ENCODE measurements at regions of chr16 and their contacts with region 1.

Region 1: DNA sequence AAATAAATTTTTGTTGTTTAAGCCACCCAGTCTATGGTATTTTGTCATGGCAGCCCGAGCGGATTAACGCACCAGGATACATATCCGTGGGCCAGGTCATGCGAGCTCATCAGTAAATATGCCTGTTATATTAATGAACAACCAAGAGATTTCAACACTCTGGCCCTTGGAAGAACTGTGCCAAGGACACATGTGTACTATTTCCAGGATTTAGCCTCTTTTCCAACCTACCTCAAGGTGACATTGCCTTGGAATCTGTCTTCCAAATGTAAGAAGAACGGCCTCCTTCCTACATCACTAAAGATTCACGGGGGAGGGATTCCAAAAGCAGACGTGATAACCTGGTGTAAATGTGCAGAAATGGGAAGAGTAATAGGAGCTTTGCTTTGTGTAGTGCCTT is 72.8 kb upstream of the DYNLRB2 start:
- DNase-seq: no peak
- ATAC-seq: no peak
- H3K4me3 ChIP-seq: no peak overlapping the region
- H3K4me3 Mint-ChIP-seq: no peak overlapping the region
- H3K27ac ChIP-seq: no peak overlapping the region
- H3K27ac Mint-ChIP-seq: no peak overlapping the region
- H3K4me1 ChIP-seq: peaks cover 0 to 6% of the 10 kb centered on the region in 2 experiments
- H3K4me1 Mint-ChIP-seq: peaks cover 4 to 6% (median 4%) of the 10 kb centered on the region in 3 donors
- H3K27me3 ChIP-seq: peaks cover 0 to 18% of the 10 kb centered on the region in 2 experiments
- H3K27me3 Mint-ChIP-seq: peaks cover 10 to 36% of the 10 kb centered on the region in 2 donors

Region 2: DNA sequence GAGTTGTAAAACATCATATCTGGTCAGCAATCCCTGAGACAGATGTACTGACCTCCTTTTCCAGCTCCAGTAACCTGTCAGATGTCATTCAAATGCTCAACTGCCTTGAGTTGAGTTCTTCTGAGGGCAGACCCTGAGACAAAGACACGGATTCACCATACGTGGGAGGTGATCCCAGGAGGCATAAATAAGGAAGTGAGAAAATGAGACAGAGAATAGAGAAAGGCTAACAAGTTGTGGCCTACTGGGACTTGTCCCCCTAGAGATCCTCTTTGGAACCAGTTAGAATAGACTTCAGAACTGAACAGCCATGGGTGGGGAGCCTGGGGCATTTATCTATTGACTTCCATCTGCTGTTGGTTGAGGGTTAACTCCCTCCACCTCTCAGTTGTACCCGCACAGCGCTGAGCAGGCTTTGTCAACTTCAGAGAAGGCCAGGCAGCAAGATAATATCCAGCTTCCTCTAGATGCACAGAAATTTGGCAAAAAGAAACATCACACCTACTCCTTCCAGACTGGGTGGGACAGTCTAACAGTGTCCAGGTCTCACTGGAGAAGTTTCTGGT is 50.2 kb before region 1 on chr16:
- CTCF ChIA-PET with region 1: no interaction called
- POLR2A ChIA-PET with region 1: interaction called in 1 of 2 experiments, 10 read pairs
- DNase-seq: no peak
- ATAC-seq: no peak
- H3K4me3 ChIP-seq: no peak overlapping the region
- H3K4me3 Mint-ChIP-seq: no peak overlapping the region
- H3K27ac ChIP-seq: no peak overlapping the region
- H3K27ac Mint-ChIP-seq: no peak overlapping the region
- H3K4me1 ChIP-seq: no peaks in the 10 kb centered on the region
- H3K4me1 Mint-ChIP-seq: no peaks in the 10 kb centered on the region
- H3K27me3 ChIP-seq: peaks cover 0 to 3% of the 10 kb centered on the region in 2 experiments
- H3K27me3 Mint-ChIP-seq: peaks cover 19 to 31% of the 10 kb centered on the region in 2 donors

Region 3: GRCh38 chr16:80824718-80825364 is 356.8 kb after region 1 on chr16:
- CTCF ChIA-PET with region 1: no interaction called
- POLR2A ChIA-PET with region 1: no interaction called
- DNase-seq: peak in 17 of 35 experiments; percentile 3 to 78 (median 17)
- ATAC-seq: peak in 1 of 4 experiments; percentile 56
- H3K4me3 ChIP-seq: no peak overlapping the region
- H3K4me3 Mint-ChIP-seq: no peak overlapping the region
- H3K27ac ChIP-seq: no peak overlapping the region
- H3K27ac Mint-ChIP-seq: no peak overlapping the region
- H3K4me1 ChIP-seq: no peaks in the 10 kb centered on the region
- H3K4me1 Mint-ChIP-seq: no peaks in the 10 kb centered on the region
- H3K27me3 ChIP-seq: no peaks in the 10 kb centered on the region
- H3K27me3 Mint-ChIP-seq: peaks cover 6 to 7% of the 10 kb centered on the region in 2 donors